ENCODE measurements at regions of chr3 and their contacts with region 1.

Region 1: DNA sequence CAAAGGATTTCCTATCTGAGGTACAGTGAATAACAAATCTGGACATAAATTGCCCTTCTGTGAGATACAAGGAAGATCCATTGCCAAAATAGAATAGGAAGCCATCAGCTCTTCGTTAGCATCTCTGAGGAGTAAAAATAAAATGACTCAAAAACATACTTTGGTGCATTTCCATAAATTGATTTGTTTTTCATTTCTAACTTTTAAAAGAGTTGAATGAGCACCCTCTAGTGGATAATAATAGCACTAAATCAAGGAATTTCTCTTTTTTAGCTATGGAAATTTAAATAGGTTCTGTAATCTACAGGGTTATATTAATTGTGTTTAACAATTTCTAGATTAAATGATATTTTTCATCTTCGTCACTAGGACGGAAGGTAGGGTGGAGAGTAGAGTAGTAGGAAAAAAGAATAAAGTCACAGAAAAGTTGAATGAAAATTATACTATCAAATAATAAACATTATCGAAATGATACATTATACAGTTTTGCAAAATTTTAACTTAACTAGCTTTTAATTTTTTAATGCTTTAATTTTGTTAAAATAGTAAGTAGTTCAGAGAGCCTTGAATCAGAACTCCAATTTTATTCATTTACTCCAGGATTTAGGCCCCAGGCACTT is 6.4 kb downstream of the NSUN3 start:
- DNase-seq: peak; percentile 11
- H3K27ac ChIP-seq: no peak overlapping the region
- CTCF ChIP-seq: peak; percentile 67

Region 2: DNA sequence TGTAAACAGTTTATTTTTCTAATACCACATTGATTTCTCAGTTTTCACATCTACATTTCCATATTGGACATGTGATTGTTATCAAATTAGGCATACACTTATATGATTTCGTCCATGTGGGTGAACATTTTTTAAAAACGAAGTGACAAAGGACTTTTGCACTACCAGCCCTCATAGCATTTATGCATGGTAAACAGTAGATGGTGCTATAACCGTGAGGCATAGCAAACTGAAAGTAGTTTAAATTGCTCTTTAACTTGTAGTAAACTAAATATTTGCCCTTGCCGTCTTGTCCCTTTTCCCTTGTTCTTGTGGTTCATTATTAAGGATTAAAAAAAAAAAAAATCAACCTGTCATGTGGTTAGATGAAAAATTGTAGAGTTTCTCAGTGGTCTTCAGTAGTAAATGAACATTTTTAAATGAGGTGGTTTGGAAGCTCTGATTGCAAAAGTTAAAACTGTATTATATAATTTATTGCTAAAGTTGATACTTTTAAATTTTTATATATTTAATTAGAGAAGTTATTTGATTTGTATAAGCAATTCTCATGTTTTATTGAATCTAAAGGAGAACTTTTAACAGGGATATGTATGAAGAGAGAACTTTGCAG is 64.9 kb before region 1 on chr3:
- CTCF ChIA-PET with region 1: interaction called, 11 read pairs
- POLR2A ChIA-PET with region 1: no interaction called
- DNase-seq: peak; percentile 54
- H3K27ac ChIP-seq: no peak overlapping the region
- CTCF ChIP-seq: peak; percentile 91

Measured in RWPE1 (cell line).